ENCODE measurements at regions of chr12 and their contacts with region 1.

Region 1: DNA sequence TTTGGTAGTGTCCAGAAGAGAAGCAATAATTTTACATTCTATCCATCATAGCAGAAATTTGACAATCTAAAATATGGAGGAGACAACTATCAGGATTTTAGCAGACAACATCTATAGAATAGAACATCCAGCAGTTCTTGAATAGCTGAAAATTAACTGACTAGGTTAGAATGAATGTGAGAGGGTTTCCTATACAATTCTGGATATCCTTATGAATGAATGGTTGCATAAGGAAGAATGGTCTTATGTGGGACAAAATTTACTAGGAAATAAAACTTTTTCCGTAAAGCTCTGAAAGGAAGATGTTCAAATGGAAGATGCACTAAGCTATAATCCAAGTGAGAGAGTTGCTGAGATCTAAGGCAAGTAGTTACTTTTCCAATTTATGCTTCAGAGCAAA is at the start of gene OR6C3:
- DNase-seq: no peak

Region 2: GRCh38 chr12:54549774-54550451 is 780.5 kb before region 1 on chr12:
- intact Hi-C with region 1: no loop called
- DNase-seq: peak in 7 of 10 donors; percentile 10 to 85 (median 33)

Region 3: DNA sequence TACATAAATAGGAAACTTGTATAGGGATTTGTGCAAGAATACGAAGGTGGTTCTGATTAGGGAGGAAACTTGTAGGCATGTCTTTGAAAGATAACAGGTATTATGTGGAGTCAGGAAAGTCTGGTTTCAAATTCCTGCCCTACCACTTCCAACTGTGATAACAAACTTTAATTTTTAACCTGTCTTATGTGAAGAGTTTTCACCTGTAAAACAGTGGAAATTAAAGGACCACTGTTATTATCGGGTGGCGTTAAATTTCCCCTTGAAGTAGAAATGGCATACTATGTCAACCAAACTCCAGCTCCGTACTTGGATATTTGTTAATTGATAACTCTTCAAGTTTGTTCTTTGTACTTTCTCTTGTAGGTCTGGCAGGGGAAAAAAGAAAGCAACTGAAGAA is 10.2 kb before region 1 on chr12:
- intact Hi-C with region 1: loop called (anchors 1 kb)
- DNase-seq: no peak

Region 4: GRCh38 chr12:55515696-55516095 is 185.2 kb after region 1 on chr12:
- intact Hi-C with region 1: no loop called
- DNase-seq: no peak